ENCODE measurements at regions of chr17 and their contacts with region 1.

Region 1: DNA sequence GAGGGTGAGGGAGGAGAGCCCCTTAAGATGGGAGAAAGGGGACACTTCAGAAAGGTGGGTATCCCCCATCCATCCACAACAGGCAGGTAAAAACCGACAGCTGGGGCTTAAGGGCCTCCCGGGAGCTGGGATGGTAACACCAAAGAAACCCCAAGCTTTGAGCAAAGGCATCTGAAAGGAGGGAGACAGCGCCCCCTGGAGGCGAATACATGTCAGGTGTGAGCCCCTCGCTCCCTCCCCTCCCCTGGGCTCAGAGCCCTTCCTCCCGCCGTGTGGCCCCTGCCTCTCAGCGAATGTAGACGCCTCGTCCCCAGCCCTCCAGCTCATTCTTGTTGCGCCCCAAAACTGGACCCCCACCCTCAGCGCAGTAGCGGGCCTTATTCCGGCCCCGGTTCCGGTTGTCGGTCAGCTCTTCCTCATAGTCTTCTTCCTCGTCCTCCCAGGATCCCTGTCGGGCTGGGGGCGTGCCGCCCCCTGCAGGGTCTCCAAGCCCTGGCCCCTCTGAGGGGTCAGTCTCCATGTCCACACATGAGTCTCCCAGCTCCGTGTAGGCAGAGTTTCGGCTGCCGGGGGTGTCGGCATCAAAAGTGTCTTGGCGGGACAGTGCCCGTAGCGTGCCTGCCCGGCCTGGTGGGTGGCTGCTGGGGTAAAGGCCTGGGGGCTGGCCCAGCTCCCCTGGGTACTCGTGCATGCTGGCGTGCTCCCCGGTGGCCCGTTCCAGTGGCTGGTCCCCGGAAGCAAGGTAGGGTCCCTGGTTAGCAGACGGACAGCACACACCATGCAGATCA is 9.1 kb upstream of the ARL5C start:
- DNase-seq: peak; percentile 79 to 90
- ATAC-seq: peak; percentile 64 to 86; a peak in 5 of 6 replicates
- H3K4me3 ChIP-seq: no peak overlapping the region
- H3K27ac ChIP-seq: no peak overlapping the region
- H3K4me1 ChIP-seq: peaks cover 12% of the 10 kb centered on the region
- CTCF ChIP-seq: peak; percentile 90
- EP300 ChIP-seq: no peak
- POLR2A ChIP-seq: no peak
- RAD21 ChIP-seq: peak; percentile 58 to 71

Region 2: GRCh38 chr17:39069114-39069756 is 105.9 kb before region 1 on chr17:
- CTCF ChIA-PET with region 1: interaction called, 11 read pairs
- POLR2A ChIA-PET with region 1: no interaction called
- DNase-seq: peak; percentile 58 to 93
- ATAC-seq: peak; percentile 75 to 92; a peak in 5 of 6 replicates
- H3K4me3 ChIP-seq: no peak overlapping the region
- H3K27ac ChIP-seq: no peak overlapping the region
- H3K4me1 ChIP-seq: no peaks in the 10 kb centered on the region
- CTCF ChIP-seq: peak; percentile 66
- EP300 ChIP-seq: no peak
- POLR2A ChIP-seq: no peak
- RAD21 ChIP-seq: peak; percentile 63 to 73

Region 3: DNA sequence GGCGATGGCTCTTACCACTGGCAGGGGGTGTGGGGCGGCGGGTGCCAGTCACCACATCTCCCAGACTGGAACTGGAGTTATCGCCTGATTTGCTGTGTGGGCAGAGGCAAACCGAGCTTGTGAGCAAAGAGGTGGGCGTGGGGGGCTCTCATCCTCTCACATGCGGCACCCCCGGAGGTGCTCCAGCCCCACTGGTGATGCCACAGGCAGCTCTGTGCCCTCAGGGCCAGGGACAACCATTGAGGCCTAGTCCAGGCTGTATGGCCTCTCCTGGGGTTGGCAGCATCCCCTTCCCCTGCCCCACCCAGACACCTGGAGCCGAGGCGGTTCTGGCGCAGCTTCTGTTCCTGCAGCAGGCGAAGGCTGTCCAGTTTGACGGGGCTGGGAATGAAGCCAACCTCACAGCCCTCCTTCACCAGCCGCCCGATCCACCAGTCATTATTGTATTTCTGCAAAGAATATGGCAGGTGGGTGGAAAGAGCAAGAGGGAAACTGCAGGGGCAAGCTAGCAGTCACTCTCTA is 11.4 kb after region 1 on chr17:
- CTCF ChIA-PET with region 1: interaction called, 115 read pairs
- POLR2A ChIA-PET with region 1: no interaction called
- DNase-seq: no peak
- ATAC-seq: no peak
- H3K4me3 ChIP-seq: no peak overlapping the region
- H3K27ac ChIP-seq: no peak overlapping the region
- H3K4me1 ChIP-seq: no peaks in the 10 kb centered on the region
- CTCF ChIP-seq: no peak
- EP300 ChIP-seq: no peak
- POLR2A ChIP-seq: no peak
- RAD21 ChIP-seq: no peak

Region 4: DNA sequence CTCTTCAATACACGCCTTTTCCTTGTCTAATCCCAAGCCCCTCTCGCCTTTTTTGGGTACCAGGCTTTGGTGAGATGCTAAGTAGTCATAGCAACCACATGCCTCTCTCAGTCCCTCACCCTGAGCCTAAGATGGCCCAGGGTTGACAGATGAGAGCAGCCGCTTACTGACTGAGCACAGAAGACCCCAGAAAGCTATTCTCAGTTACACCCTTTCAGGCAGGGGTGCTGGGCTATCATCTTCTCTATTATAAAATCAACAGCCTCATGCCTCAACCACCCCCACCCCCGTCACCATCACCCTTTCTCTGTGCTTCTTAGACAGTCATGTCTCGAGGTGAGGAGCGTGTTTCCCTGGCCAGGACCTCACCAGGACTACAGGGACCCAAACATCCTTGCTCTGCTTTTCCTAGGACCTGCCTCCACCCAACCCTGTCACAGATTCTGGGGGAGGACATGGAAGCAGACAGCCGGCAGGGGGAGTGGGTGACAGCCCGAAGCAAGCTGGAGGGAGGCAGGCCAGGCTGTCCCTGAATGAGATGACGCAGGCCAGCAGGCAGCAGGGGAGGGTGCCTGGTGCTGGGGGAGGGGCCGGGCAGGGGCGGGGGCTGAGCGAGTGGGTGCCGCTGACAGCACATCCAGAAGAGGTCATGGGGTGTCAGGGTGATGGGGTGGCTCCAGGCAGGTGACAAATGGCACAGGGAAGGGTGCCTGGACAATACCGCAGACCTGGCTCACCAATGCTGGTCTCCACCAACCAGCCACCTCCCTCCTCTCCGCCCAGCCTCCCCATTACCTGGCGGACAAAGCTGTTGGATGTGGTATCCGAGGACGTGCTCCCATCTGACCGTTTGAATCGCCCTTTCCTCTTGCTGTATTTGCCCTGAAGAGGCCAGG is 19.2 kb after region 1 on chr17:
- CTCF ChIA-PET with region 1: interaction called, 115 read pairs
- POLR2A ChIA-PET with region 1: interaction called, 4 read pairs
- DNase-seq: peak; percentile 73 to 84
- ATAC-seq: peak; percentile 44 to 63
- H3K4me3 ChIP-seq: no peak overlapping the region
- H3K27ac ChIP-seq: peak overlapping the region in 1 of 2 experiments; percentile 96; a peak in 1 of 6 replicates
- H3K4me1 ChIP-seq: peaks cover 35% of the 10 kb centered on the region
- CTCF ChIP-seq: peak; percentile 33; the same call in 2 of the 3 replicates
- EP300 ChIP-seq: no peak
- POLR2A ChIP-seq: no peak
- RAD21 ChIP-seq: peak in 1 of 2 experiments; percentile 36; a peak in 1 of 5 replicates

Measured in A549 (cell line).